Naive thymus-derived CD8-positive, alpha-beta T cell (primary cell): ENCODE measurements at regions of chr17 and their contacts with region 1.

Region 1: DNA sequence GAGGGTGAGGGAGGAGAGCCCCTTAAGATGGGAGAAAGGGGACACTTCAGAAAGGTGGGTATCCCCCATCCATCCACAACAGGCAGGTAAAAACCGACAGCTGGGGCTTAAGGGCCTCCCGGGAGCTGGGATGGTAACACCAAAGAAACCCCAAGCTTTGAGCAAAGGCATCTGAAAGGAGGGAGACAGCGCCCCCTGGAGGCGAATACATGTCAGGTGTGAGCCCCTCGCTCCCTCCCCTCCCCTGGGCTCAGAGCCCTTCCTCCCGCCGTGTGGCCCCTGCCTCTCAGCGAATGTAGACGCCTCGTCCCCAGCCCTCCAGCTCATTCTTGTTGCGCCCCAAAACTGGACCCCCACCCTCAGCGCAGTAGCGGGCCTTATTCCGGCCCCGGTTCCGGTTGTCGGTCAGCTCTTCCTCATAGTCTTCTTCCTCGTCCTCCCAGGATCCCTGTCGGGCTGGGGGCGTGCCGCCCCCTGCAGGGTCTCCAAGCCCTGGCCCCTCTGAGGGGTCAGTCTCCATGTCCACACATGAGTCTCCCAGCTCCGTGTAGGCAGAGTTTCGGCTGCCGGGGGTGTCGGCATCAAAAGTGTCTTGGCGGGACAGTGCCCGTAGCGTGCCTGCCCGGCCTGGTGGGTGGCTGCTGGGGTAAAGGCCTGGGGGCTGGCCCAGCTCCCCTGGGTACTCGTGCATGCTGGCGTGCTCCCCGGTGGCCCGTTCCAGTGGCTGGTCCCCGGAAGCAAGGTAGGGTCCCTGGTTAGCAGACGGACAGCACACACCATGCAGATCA is 9.1 kb upstream of the ARL5C start:
- DNase-seq: peak; percentile 68 to 90 (median 78)
- ATAC-seq: peak; percentile 94 to 98
- H3K4me3 Mint-ChIP-seq: no peak overlapping the region
- H3K27ac Mint-ChIP-seq: peak overlapping the region in 2 of 10 donors; percentile 51 to 77
- H3K4me1 Mint-ChIP-seq: peaks cover 16 to 33% (median 25%) of the 10 kb centered on the region in 4 donors
- H3K27me3 Mint-ChIP-seq: no peaks in the 10 kb centered on the region

Region 2: DNA sequence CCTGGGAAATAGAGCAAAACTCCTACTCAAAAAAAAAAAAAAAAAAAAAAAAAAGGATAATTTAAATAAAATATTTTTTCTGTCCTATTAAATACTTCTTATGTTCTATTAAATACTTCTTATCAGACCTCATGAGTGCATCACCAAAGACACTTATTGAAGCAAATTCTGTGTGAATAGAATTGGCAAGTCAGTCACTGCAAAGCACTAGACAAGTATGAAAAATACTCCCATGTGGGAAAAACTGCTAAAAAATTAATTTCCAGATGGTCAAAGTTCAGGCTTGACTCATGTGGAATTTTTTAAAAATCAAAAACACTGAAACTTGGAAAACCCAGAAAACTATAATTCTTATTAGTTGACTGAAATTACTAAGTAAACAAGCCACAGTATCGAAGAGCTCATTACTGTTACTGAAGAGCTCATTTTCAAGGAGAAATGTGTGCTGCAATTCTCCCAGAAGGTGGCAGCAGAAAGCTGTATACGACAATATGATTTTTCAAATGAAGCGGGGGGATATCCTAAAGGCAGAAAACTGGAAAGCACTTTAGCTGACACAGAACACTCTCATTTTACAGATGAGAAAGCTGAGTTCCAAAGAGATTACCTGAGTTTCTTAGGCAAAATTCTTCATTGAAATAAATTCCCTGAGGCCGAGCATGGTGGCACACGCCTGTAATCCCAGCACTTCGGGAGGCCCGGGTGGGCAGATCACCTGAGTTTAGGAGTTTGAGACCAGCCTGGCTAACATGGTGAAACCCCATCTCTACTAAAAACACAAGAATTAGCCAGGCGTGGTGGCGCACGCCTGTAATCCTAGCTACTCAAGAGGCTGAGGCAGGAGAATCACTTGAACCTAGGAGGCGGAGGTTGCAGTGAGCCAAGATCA is 192.0 kb before region 1 on chr17:
- POLR2A ChIA-PET with region 1: interaction called, 14 read pairs
- DNase-seq: peak in 9 of 10 donors; percentile 33 to 74 (median 53)
- ATAC-seq: peak; percentile 73 to 77
- H3K4me3 Mint-ChIP-seq: no peak overlapping the region
- H3K27ac Mint-ChIP-seq: peak overlapping the region in 1 of 10 donors; percentile 24
- H3K4me1 Mint-ChIP-seq: peaks cover 0 to 2% (median 0%) of the 10 kb centered on the region in 4 donors
- H3K27me3 Mint-ChIP-seq: no peaks in the 10 kb centered on the region